ENCODE measurements at regions of chr6 and their contacts with region 1.

Region 1: DNA sequence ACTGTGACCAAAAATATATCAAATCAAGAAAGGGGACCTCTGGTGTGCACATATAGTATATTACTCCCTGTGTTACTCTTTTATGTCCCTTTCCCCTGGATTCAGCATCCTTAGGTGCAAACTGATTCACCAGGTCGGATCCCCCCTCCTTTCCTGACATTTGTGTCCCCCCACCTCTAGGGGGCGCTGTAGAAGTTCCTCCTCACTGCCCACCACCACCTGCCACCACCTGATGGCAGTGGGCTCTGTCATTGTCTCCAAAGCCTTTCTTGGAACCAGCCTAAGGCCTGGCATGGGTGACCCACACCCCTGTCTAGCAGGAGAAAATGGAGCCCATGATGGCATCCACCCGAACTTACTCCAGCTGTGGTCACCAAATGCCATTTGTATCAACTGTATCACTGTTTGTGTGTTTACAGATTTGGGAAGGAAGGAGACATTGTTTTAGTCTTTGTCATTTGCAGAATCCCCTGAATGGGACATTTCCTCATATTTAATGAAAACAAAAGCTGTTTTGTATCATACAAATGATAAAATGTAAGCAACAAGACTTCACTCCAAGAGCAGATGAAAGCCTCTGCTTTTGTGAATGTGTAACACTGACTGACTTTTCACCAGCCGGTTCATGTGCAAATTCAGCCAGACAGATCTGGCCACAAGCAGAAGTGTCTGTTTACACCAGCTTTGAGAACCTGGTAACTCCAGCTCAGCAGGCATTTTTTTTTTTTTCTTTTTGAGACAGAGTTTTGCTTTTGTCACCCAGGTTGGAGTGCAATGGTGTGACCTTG is 66.2 kb downstream of the ARMC2 start:
- DNase-seq: peak in 1 of 2 experiments; percentile 88
- H3K4me3 ChIP-seq: no peak overlapping the region
- H3K27ac ChIP-seq: no peak overlapping the region
- H3K4me1 ChIP-seq: no peaks in the 10 kb centered on the region; a peak in 1 of 7 replicates
- H3K27me3 ChIP-seq: no peaks in the 10 kb centered on the region; a peak in 1 of 7 replicates
- CTCF ChIP-seq: peak; percentile 95 to 99 (median 99)
- EP300 ChIP-seq: no peak
- POLR2A ChIP-seq: no peak
- RAD21 ChIP-seq: peak; percentile 78 to 85

Region 2: GRCh38 chr6:108927927-108928326 is 13.5 kb after region 1 on chr6:
- CTCF ChIA-PET with region 1: interaction called, 20 read pairs
- POLR2A ChIA-PET with region 1: interaction called, 3 read pairs
- DNase-seq: no peak
- H3K4me3 ChIP-seq: no peak overlapping the region
- H3K27ac ChIP-seq: no peak overlapping the region
- H3K4me1 ChIP-seq: peaks cover 0 to 6% (median under 1%) of the 10 kb centered on the region in 4 experiments; a peak in 4 of 7 replicates
- H3K27me3 ChIP-seq: no peaks in the 10 kb centered on the region
- CTCF ChIP-seq: no peak
- EP300 ChIP-seq: no peak
- POLR2A ChIP-seq: no peak
- RAD21 ChIP-seq: no peak

Region 3: DNA sequence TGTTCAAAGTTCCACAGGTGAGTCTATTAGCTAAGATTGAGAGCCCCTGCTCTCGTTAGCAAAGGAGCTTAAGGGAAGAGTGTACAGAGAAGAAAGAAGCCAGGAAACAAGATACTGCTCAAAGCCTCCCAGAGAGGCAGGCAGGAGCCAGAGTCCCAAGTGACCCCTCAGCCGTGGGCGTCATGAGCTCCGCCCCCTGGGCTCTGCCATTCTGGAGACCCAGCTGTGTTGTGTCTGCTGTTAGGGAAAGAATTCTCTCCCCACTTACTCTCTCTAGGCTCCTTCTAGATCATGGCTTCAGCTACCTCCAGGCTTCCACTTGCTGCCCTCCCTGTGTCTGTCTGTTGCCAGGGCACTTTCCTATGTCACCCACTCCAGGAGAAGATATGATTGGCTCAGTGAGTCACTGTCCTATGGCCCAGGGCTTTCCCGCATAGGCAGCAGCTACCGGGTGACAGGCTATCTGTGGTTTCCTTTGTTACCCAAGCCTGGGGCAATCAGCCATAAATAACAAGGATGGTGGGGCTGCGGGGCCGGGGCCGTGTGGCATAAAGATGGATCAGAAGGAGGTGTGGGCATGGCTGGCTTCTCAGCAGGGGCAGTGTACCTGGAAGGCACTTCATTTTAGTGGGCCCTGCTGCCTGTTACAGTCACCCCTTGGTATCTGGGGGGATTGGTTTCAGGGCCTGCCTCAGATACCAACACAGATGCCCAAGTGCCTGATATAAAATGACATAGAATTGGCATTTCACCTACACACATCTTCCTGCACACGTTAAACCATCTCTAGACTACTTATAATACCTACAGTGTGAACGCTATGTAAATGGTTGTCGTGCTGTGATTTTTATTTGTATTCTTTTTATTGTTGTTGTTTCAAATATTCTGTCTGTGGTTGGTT is 52.7 kb after region 1 on chr6:
- CTCF ChIA-PET with region 1: interaction called, 50 read pairs
- POLR2A ChIA-PET with region 1: no interaction called
- DNase-seq: no peak
- H3K4me3 ChIP-seq: no peak overlapping the region
- H3K27ac ChIP-seq: no peak overlapping the region
- H3K4me1 ChIP-seq: peaks cover 0 to 8% (median 6%) of the 10 kb centered on the region in 4 experiments; a peak in 6 of 7 replicates
- H3K27me3 ChIP-seq: no peaks in the 10 kb centered on the region
- CTCF ChIP-seq: no peak
- EP300 ChIP-seq: no peak
- POLR2A ChIP-seq: no peak
- RAD21 ChIP-seq: no peak